Caco-2 (cell line): ENCODE measurements at regions of chr7 and their contacts with region 1.

Region 1: GRCh38 chr7:98434095-98434494 is 33.2 kb upstream of the BAIAP2L1 start:
- DNase-seq: no peak
- H3K4me3 ChIP-seq: no peak overlapping the region
- H3K4me3 Mint-ChIP-seq: no peak overlapping the region
- H3K27ac Mint-ChIP-seq: no peak overlapping the region
- H3K4me1 ChIP-seq: no peaks in the 10 kb centered on the region
- H3K4me1 Mint-ChIP-seq: no peaks in the 10 kb centered on the region
- H3K27me3 ChIP-seq: no peaks in the 10 kb centered on the region
- H3K27me3 Mint-ChIP-seq: peaks cover 2% of the 10 kb centered on the region
- CTCF ChIP-seq: no peak

Region 2: DNA sequence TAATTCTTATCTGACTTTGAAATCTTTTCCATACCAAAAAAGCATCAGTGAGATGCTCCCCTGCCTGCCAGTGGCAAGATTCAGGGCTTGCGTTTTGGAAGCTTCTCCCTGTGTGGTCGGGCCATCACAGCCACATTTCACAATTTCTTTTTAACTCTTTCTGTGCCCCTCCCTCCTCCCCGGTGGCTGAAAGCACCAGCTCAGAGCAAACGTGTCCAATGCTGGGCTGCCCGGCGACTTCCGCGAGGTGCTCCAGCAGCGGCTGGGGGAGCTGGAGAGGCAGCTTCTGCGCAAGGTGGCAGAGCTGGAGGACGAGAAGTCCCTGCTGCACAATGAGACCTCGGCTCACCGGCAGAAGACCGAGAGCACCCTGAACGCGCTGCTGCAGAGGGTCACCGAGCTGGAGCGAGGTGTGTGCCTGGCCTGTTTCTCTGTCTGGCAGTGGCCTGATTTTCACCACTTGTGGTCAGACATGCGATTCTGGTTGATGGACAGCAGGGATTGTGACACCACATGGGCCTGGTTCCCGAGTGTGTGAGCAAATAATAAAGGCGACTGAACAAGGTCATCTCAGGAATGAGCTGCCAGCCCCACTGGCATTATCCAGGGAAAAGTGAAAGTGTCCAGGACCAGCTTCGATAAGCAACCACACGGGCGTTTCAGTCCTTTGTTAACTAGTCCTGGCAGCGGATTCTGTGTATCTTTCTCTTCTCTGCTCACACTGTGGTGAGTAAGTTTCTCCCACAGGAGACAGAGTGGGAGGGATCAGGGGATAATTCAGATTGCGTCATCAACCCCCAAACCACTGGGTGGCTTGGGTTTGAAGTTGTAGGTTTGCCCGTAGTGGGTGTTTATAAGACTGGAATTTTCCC is 185.6 kb after region 1 on chr7:
- CTCF ChIA-PET with region 1: no interaction called
- POLR2A ChIA-PET with region 1: no interaction called
- intact Hi-C with region 1: loop called (anchors 1 kb)
- DNase-seq: peak in 1 of 2 experiments; percentile 34
- H3K4me3 ChIP-seq: no peak overlapping the region
- H3K4me3 Mint-ChIP-seq: peak overlapping the region; percentile 38
- H3K27ac Mint-ChIP-seq: no peak overlapping the region
- H3K4me1 ChIP-seq: 0 out of 2 replicates have a peak, but pooled peaks cover 6% of the 10 kb centered on the region
- H3K4me1 Mint-ChIP-seq: no peaks in the 10 kb centered on the region
- H3K27me3 ChIP-seq: peaks cover 1% of the 10 kb centered on the region
- H3K27me3 Mint-ChIP-seq: peaks cover 16% of the 10 kb centered on the region
- CTCF ChIP-seq: no peak

Region 3: DNA sequence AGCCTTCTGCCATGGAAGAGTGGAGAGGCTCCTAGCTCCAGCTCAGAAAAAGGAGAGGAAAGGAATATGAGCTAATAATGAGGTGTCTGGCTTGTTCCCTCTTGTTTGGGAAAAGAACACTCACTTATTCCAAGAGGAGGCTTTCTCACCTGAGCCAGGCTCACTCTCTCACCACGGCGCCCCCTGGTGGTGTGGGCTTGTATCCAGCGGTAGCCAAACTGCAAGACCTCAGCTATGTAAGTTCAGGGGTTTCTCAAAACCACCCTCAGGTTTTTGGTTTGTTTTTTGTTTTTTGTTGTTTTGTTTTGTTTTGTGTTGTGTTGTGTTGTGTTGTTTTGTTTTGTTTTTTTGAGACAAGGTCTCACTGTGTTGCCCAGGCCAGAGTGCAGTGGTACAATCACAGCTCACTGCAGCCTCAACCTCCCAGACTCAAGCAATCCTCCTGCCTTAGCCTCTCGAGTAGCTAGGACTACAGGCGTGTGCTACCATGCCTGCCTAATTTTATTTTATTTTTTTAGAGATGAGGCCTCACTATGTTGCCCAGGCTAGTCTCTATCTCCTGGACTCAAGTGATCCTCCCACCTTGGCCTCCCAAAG is 311.7 kb after region 1 on chr7:
- CTCF ChIA-PET with region 1: no interaction called
- POLR2A ChIA-PET with region 1: no interaction called
- intact Hi-C with region 1: loop called (anchors 1 kb)
- DNase-seq: peak; percentile 76 to 87
- H3K4me3 ChIP-seq: no peak overlapping the region
- H3K4me3 Mint-ChIP-seq: no peak overlapping the region
- H3K27ac Mint-ChIP-seq: no peak overlapping the region
- H3K4me1 ChIP-seq: no peaks in the 10 kb centered on the region
- H3K4me1 Mint-ChIP-seq: no peaks in the 10 kb centered on the region
- H3K27me3 ChIP-seq: no peaks in the 10 kb centered on the region
- H3K27me3 Mint-ChIP-seq: no peaks in the 10 kb centered on the region
- CTCF ChIP-seq: peak; percentile 88 to 93

Region 4: GRCh38 chr7:98841179-98841997 is 407.3 kb after region 1 on chr7:
- CTCF ChIA-PET with region 1: interaction called, 4 read pairs
- POLR2A ChIA-PET with region 1: no interaction called
- intact Hi-C with region 1: loop called (anchors 1 kb)
- DNase-seq: peak; percentile 57 to 76
- H3K4me3 ChIP-seq: no peak overlapping the region
- H3K4me3 Mint-ChIP-seq: no peak overlapping the region
- H3K27ac Mint-ChIP-seq: no peak overlapping the region
- H3K4me1 ChIP-seq: no peaks in the 10 kb centered on the region
- H3K4me1 Mint-ChIP-seq: no peaks in the 10 kb centered on the region
- H3K27me3 ChIP-seq: no peaks in the 10 kb centered on the region
- H3K27me3 Mint-ChIP-seq: peaks cover 2% of the 10 kb centered on the region
- CTCF ChIP-seq: peak; percentile 94 to 98